ENCODE measurements at regions of chr5 and their contacts with region 1.

Region 1: DNA sequence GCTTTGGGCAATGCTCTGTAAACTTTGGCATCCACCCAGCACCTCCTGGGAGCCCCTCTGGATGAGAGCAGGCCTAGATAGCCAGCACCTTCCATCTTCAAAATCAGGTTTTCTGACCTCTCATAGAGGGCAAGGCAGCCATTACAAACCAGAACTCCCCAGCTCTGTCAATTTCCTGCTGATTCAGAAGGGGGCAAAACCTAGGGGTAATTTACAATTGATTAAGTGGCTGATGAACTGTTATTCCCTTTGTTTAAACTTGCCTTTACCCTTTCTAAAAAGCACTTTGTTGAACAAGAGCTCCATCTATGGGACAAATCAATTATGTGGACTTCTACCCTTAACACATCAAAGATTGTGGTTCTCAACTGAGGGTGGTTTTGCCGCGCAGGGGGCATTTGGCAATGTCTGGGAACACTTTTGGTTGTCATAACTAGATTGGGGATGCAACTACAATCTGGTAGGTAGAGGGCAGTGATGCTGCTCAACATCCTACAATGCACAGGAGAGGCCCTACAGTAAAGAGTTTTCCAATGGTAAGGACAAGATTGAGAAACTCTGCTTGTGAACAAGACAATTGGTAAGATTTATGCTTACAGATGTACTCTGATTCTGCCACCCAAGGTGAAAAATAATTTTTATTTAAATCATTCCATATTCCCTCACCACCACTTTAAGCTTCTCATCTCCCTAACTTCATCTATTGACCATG is 184.1 kb downstream of the MARCHF11 start:
- ATAC-seq: peak in 4 of 8 experiments; percentile 52 to 80 (median 66)
- H3K4me3 ChIP-seq: no peak overlapping the region
- H3K27ac ChIP-seq: no peak overlapping the region
- H3K4me1 ChIP-seq: peaks cover 0 to 32% of the 10 kb centered on the region in 2 donors

Region 2: GRCh38 chr5:15105796-15106393 is 889.6 kb before region 1 on chr5:
- in situ Hi-C with region 1: loop called in 1 of 9 experiments (anchors 25 kb)
- ATAC-seq: peak in 4 of 8 experiments; percentile 65 to 89 (median 88)
- H3K4me3 ChIP-seq: no peak overlapping the region
- H3K27ac ChIP-seq: no peak overlapping the region
- H3K4me1 ChIP-seq: no peaks in the 10 kb centered on the region

Region 3: GRCh38 chr5:16120579-16120978 is 125.1 kb after region 1 on chr5:
- in situ Hi-C with region 1: no loop called
- ATAC-seq: no peak
- H3K4me3 ChIP-seq: no peak overlapping the region
- H3K27ac ChIP-seq: no peak overlapping the region
- H3K4me1 ChIP-seq: no peaks in the 10 kb centered on the region

Region 4: DNA sequence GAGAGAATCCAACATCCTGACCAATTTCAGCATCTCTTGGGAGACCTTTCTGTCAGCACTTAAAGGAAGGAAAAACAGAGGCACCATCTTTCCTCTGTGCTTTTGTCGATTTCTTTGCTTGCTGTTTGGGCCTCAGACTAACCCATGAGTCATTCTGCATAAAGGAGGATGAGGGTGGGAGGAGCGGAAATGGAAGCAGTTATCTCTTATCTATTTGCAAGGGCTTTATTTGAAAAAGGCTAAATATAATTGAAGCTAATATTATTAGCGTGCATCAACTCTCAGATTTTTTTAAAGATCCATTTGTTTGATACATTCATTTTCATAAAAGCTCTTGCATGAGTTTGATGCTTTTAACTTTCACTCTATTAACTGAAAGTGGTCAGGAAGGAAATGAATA is 397.2 kb after region 1 on chr5:
- in situ Hi-C with region 1: no loop called
- ATAC-seq: peak in 7 of 8 experiments; percentile 46 to 93 (median 69)
- H3K4me3 ChIP-seq: no peak overlapping the region
- H3K27ac ChIP-seq: no peak overlapping the region
- H3K4me1 ChIP-seq: peaks cover 9 to 22% of the 10 kb centered on the region in 2 donors

Measured in motor neuron (in vitro differentiated cells).